HepG2 (cell line): ENCODE measurements at regions of chr5 and their contacts with region 1.

Region 1: DNA sequence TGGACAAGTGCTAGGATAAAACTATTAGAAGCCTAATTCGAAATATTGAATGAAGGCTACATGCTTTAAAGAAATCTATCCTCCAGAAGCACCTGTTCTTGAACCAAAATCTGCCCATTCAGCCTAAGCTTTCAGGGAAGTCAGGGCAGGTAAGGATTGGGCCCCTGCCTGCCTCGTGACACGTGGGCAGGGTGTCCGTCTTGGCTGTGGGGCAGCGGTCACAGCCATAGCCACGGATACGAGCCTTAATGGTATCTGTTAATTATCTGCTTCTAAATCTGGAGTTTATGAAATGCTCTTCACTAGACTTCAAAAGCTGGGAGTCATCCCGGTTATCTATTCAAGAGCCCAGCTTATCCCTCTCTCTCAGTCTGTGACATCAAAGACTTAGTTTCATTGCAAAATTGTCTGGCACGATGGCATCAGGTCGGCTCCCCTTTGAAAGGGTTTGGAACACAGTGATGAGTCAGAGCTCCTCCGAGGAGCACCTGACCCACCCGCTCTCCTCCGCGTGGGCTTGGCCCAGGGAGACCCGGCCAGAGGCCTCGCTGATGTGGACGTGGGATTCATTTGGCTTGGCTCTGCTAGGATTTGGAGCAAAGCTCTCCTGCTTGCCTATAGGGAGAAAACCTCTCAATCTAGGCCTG is 135.9 kb downstream of the MACROH2A1 start:
- DNase-seq: peak; percentile 98
- ATAC-seq: peak; percentile 88
- H3K4me3 ChIP-seq: peak overlapping the region; percentile 11 to 60 (median 54); a peak in 5 of 6 replicates
- H3K27ac ChIP-seq: peak overlapping the region; percentile 68
- H3K4me1 ChIP-seq: peaks cover 52% of the 10 kb centered on the region
- H3K27me3 ChIP-seq: no peaks in the 10 kb centered on the region
- CTCF ChIP-seq: no peak
- EP300 ChIP-seq: peak; percentile 89 to 96; a peak in 3 of 4 replicates
- POLR2A ChIP-seq: peak in 1 of 2 experiments; percentile 94; a peak in 2 of 4 replicates
- RAD21 ChIP-seq: no peak

Region 2: DNA sequence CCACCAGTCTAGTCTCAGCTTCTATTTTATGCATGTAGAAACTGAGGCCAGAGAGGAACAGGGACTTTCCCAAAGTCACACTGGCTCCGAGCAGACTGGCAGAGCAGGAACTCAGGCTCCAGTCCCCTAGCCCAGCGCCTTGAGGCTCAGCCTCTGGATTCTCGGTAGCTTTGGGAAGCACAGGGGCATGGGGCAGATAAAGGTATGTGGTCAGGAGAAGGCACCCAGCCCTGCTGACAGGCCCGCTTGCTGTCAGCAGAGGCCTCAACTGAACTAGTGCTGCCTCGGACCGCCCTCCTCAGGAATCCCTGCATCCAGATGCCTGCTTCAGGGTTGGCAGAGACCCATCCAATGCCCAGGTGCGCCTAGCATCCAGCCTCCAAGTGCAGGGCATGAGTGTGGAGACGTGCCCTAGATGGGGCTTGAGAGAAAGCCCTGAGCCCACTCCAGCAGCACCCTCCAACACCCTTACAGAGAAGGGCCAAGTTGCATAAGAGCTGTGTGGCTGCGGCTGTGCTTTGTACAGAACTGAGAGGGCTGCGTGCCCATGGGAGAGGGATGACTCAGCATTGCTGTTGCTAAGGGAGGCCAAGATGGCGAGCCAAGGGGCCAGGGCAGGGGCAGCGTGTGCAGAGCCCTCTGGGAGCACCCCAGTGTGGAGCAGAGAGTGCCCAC is 32.8 kb before region 1 on chr5:
- CTCF ChIA-PET with region 1: no interaction called
- POLR2A ChIA-PET with region 1: interaction called, 13 read pairs
- in situ Hi-C with region 1: no loop called
- intact Hi-C with region 1: no loop called
- DNase-seq: peak; percentile 29
- ATAC-seq: peak; percentile 18
- H3K4me3 ChIP-seq: 0 out of 6 replicates have a peak overlapping the region, but pooled peaks of 1 of the 3 experiments have one; percentile 11
- H3K27ac ChIP-seq: peak overlapping the region; percentile 68
- H3K4me1 ChIP-seq: peaks cover 77% of the 10 kb centered on the region
- H3K27me3 ChIP-seq: no peaks in the 10 kb centered on the region
- CTCF ChIP-seq: no peak
- EP300 ChIP-seq: peak in 1 of 2 experiments; percentile 36; a peak in 2 of 4 replicates
- POLR2A ChIP-seq: no peak
- RAD21 ChIP-seq: no peak

Region 3: GRCh38 chr5:135246923-135247795 is 16.0 kb before region 1 on chr5:
- CTCF ChIA-PET with region 1: no interaction called
- POLR2A ChIA-PET with region 1: interaction called, 10 read pairs
- in situ Hi-C with region 1: no loop called
- intact Hi-C with region 1: no loop called
- DNase-seq: no peak
- ATAC-seq: no peak
- H3K4me3 ChIP-seq: no peak overlapping the region
- H3K27ac ChIP-seq: no peak overlapping the region
- H3K4me1 ChIP-seq: peaks cover 50% of the 10 kb centered on the region
- H3K27me3 ChIP-seq: no peaks in the 10 kb centered on the region
- CTCF ChIP-seq: no peak
- EP300 ChIP-seq: no peak
- POLR2A ChIP-seq: no peak
- RAD21 ChIP-seq: no peak

Region 4: DNA sequence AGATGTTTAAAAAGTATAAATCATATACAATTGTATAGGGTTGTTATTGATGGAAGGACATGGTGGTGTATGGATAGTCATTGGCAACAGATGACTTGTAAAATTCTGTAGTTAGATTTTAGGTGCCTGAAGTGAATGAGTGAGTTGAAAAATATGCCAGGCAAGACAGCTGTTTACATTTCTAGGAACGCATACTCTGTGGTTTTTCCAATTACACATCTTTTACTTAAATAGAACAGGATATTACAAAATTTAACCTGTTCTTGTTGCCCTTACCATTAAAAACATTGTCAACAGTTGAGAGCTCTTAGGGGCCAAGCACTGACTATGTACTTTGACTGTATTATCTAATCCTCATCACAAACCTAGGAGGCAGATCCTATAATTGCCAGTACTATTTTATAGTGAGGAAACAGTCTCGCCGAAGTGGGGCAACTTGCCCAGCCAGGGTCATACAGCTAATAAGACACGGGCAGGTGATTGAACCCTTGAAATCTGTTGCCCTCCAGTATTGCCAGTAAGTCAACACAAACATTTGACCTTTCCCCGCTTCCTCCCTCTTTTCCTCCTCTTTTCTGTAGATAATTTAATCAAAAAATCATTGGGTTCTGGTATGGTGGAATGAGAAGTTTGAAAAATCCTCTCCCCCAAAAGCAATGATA is 47.3 kb after region 1 on chr5:
- CTCF ChIA-PET with region 1: no interaction called
- POLR2A ChIA-PET with region 1: interaction called, 13 read pairs
- in situ Hi-C with region 1: no loop called
- intact Hi-C with region 1: no loop called
- DNase-seq: no peak
- ATAC-seq: no peak
- H3K4me3 ChIP-seq: no peak overlapping the region
- H3K27ac ChIP-seq: no peak overlapping the region
- H3K4me1 ChIP-seq: peaks cover 57% of the 10 kb centered on the region
- H3K27me3 ChIP-seq: no peaks in the 10 kb centered on the region; a peak in 1 of 5 replicates
- CTCF ChIP-seq: no peak
- EP300 ChIP-seq: no peak
- POLR2A ChIP-seq: no peak
- RAD21 ChIP-seq: no peak

Region 5: DNA sequence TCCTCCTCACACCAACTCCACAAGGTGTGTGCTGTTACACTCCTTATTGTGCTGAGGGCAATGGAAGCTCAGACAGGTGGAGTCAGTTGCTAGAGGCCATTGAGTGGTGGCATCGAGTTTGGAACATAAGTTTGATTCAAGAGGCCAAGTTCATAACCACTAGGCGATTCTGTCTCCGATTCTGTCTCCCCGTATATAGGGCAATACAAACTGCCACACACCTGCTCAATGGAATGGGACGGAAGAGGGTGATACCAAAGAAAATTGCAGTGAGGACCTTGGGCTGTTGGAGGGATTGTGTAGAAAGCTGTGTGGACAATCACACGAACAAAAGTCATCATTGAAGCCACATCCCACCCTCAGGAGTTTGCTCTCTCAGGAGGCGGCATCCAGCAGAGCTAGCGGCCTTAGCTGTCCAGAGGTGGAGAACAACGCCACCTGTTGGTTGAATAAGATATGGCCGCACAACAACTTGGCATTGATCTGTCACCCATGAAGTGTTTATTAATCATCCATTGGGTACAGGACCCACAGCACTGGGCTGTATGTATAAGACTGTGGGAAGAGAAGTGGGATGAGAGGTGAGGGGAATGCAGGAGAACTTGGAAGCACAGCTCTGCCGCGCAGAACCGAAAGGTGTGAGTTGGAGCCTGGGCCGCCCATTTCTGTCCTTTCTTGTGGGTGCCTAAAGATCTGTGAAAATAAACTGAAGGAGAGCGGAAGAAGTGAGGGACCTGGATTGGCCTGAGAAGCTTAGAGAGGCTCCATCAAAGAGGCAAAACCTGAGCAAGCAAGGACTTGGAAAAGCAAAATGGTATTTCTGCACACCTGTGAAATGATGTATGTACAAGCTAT is 288.7 kb after region 1 on chr5:
- CTCF ChIA-PET with region 1: no interaction called
- POLR2A ChIA-PET with region 1: no interaction called
- in situ Hi-C with region 1: no loop called
- intact Hi-C with region 1: no loop called
- DNase-seq: peak; percentile 64
- ATAC-seq: peak; percentile 91
- H3K4me3 ChIP-seq: no peak overlapping the region
- H3K27ac ChIP-seq: no peak overlapping the region
- H3K4me1 ChIP-seq: no peaks in the 10 kb centered on the region
- H3K27me3 ChIP-seq: peaks cover 0 to 2% of the 10 kb centered on the region in 2 experiments; a peak in 1 of 5 replicates
- CTCF ChIP-seq: peak; percentile 92
- EP300 ChIP-seq: no peak
- POLR2A ChIP-seq: no peak
- RAD21 ChIP-seq: peak; percentile 84